Natural killer cell (primary cell): ENCODE measurements at regions of chr5 and their contacts with region 1.

Region 1: DNA sequence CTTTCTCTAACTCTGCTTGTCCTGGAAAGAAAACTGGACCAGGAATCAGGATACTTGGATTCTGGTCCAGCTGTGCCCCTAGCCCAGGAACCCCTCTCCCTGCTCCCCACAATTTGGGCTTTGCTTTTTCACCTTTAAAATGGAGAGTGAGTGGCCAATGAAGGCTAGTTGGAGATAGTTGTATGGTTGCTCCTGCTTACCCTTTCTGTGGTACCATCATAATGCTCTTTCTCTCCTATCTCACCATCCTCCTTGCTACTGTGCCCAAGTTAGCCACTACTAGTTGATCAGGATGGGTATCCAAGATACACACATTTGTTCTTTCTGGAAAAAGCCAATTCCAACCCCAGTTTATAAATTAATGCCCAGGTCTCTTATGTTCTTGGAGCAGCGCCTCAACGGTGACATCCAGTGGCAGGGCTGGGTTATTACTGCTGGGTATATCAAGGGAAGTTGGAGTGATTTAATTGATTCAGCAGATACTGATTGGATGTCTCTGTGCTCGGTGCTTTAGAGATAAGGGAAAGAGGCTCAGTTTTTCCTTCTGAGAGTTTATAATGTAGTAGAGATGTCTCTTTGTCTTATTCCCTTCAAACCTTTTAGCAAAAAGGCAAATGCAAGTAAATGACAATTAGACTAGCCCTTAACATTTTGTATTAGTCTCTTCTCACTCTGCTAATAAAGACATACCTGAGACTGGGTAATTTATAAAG is 38.6 kb downstream of the FAXDC2 start:
- DNase-seq: peak; percentile 45 to 82
- ATAC-seq: peak; percentile 81 to 92 (median 84)
- H3K4me3 ChIP-seq: no peak overlapping the region
- H3K4me3 Mint-ChIP-seq: peak overlapping the region; percentile 7
- H3K27ac ChIP-seq: no peak overlapping the region
- H3K27ac Mint-ChIP-seq: peak overlapping the region in 1 of 2 donors; percentile 50
- H3K4me1 ChIP-seq: peaks cover 21% of the 10 kb centered on the region
- H3K4me1 Mint-ChIP-seq: peaks cover 29 to 34% of the 10 kb centered on the region in 2 donors
- H3K27me3 ChIP-seq: no peaks in the 10 kb centered on the region
- H3K27me3 Mint-ChIP-seq: no peaks in the 10 kb centered on the region
- CTCF ChIP-seq: peak; percentile 81

Region 2: GRCh38 chr5:154249826-154250225 is 562.0 kb before region 1 on chr5:
- intact Hi-C with region 1: no loop called
- DNase-seq: no peak
- ATAC-seq: no peak
- H3K4me3 ChIP-seq: no peak overlapping the region
- H3K4me3 Mint-ChIP-seq: no peak overlapping the region
- H3K27ac ChIP-seq: no peak overlapping the region
- H3K27ac Mint-ChIP-seq: peak overlapping the region in 1 of 2 donors; percentile 55
- H3K4me1 ChIP-seq: no peaks in the 10 kb centered on the region
- H3K4me1 Mint-ChIP-seq: peaks cover 44 to 53% of the 10 kb centered on the region in 2 donors
- H3K27me3 ChIP-seq: no peaks in the 10 kb centered on the region
- H3K27me3 Mint-ChIP-seq: no peaks in the 10 kb centered on the region
- CTCF ChIP-seq: no peak

Region 3: GRCh38 chr5:154647114-154647760 is 164.6 kb before region 1 on chr5:
- intact Hi-C with region 1: loop called (anchors 1 kb)
- DNase-seq: peak in 1 of 2 donors; percentile 48
- ATAC-seq: peak; percentile 40 to 72 (median 67)
- H3K4me3 ChIP-seq: peak overlapping the region; percentile 23
- H3K4me3 Mint-ChIP-seq: peak overlapping the region; percentile 81
- H3K27ac ChIP-seq: no peak overlapping the region
- H3K27ac Mint-ChIP-seq: peak overlapping the region in 1 of 2 donors; percentile 73
- H3K4me1 ChIP-seq: peaks cover 15% of the 10 kb centered on the region
- H3K4me1 Mint-ChIP-seq: peaks cover 16 to 20% of the 10 kb centered on the region in 2 donors
- H3K27me3 ChIP-seq: no peaks in the 10 kb centered on the region
- H3K27me3 Mint-ChIP-seq: peaks cover 14 to 21% of the 10 kb centered on the region in 2 donors
- CTCF ChIP-seq: no peak

Region 4: GRCh38 chr5:154754460-154755360 is 57.1 kb before region 1 on chr5:
- intact Hi-C with region 1: loop called (anchors 2 kb)
- DNase-seq: peak; percentile 97 to 99
- ATAC-seq: peak; percentile 86 to 97 (median 91)
- H3K4me3 ChIP-seq: peak overlapping the region; percentile 56
- H3K4me3 Mint-ChIP-seq: peak overlapping the region; percentile 86
- H3K27ac ChIP-seq: peak overlapping the region; percentile 94
- H3K27ac Mint-ChIP-seq: peak overlapping the region; percentile 89 to 90
- H3K4me1 ChIP-seq: peaks cover 22% of the 10 kb centered on the region
- H3K4me1 Mint-ChIP-seq: peaks cover 40 to 41% of the 10 kb centered on the region in 2 donors
- H3K27me3 ChIP-seq: no peaks in the 10 kb centered on the region
- H3K27me3 Mint-ChIP-seq: no peaks in the 10 kb centered on the region
- CTCF ChIP-seq: peak; percentile 42

Region 5: DNA sequence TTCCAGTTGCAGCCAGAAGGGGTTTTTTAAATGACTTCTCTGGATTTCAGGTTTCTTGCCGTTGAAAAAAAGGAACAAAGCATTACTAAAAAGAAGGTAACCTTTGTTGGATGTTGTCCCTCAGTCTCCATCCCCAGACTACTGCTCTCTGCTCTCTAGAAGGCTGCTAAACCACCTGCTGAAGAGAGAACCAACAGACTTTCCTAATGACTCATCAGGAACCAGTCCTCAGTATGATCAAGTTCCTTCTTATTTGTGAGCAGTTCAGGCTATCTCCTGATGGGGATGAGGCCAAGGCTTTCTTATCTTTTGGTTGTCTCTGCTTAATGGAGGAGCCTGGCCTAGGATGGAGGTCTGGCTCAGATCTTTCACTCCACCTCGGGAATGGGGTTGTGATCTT is 205.8 kb after region 1 on chr5:
- intact Hi-C with region 1: no loop called
- DNase-seq: no peak
- ATAC-seq: no peak
- H3K4me3 ChIP-seq: no peak overlapping the region
- H3K4me3 Mint-ChIP-seq: no peak overlapping the region
- H3K27ac ChIP-seq: no peak overlapping the region
- H3K27ac Mint-ChIP-seq: no peak overlapping the region
- H3K4me1 ChIP-seq: no peaks in the 10 kb centered on the region
- H3K4me1 Mint-ChIP-seq: no peaks in the 10 kb centered on the region
- H3K27me3 ChIP-seq: no peaks in the 10 kb centered on the region
- H3K27me3 Mint-ChIP-seq: peaks cover 10 to 36% of the 10 kb centered on the region in 2 donors
- CTCF ChIP-seq: no peak

Region 6: GRCh38 chr5:155091063-155091648 is 279.3 kb after region 1 on chr5:
- intact Hi-C with region 1: no loop called
- DNase-seq: no peak
- ATAC-seq: no peak
- H3K4me3 ChIP-seq: no peak overlapping the region
- H3K4me3 Mint-ChIP-seq: no peak overlapping the region
- H3K27ac ChIP-seq: no peak overlapping the region
- H3K27ac Mint-ChIP-seq: no peak overlapping the region
- H3K4me1 ChIP-seq: no peaks in the 10 kb centered on the region
- H3K4me1 Mint-ChIP-seq: no peaks in the 10 kb centered on the region
- H3K27me3 ChIP-seq: peaks cover 4% of the 10 kb centered on the region
- H3K27me3 Mint-ChIP-seq: peaks cover 14 to 20% of the 10 kb centered on the region in 2 donors
- CTCF ChIP-seq: no peak